GM23248 (cell line): ENCODE measurements at regions of chr3 and their contacts with region 1.

Region 1: DNA sequence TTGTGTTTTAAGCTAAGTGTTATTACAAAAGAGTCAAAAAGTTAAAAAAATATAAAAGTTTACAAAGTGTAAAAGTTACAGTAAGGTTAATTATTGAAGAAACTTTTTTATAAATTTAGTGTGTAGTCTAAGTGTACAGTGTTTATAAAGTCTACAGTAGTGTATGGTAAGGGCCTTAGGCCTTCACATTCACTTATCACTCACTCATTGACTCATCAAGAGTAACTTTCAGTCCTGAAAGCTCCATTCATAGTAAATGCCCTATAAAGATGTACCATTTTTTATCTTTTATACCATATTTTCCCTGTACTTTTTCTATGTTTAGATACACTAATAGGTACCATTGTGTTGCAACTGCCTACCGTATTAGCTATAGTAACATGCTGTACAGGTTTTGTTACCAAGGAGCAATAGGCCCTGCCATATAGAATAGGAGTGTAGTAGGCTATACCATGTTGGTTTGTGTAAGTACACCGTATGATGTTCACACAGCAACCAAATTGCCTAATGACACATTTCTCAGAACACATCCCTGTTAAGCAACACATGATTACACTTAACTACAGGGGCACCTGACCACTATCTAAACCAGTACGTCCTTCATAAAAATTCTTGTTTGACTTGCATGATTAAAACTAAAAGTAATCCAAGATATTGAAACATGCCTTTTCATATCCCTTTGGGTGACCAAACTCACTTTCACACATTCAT is 17.2 kb downstream of the RAD18 start:
- DNase-seq: no peak
- H3K4me3 ChIP-seq: no peak overlapping the region
- H3K27ac ChIP-seq: no peak overlapping the region
- H3K4me1 ChIP-seq: no peaks in the 10 kb centered on the region
- H3K27me3 ChIP-seq: no peaks in the 10 kb centered on the region

Region 2: DNA sequence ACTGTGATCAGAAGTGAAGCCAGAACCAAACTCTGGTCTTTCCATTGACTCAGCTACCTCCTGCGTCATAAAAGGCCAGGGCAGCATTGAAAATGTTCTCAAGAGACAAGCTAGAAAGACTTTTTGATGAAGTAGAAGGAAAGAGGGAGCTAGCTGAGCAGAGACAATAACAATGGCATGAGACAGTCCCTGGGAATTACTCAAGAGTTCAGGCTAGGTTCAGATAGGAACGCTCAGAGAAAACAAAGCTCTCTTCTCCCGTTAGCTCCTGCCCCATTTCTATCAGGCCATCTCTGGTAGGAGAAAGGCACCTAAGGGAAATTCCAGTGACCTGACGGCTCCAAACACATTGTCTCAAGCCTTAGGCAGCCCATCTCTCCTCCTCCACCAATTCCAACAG is 169.6 kb before region 1 on chr3:
- in situ Hi-C with region 1: loop called (anchors 10 kb)
- DNase-seq: peak; percentile 92
- H3K4me3 ChIP-seq: no peak overlapping the region
- H3K27ac ChIP-seq: peak overlapping the region; percentile 94
- H3K4me1 ChIP-seq: peaks cover 38% of the 10 kb centered on the region
- H3K27me3 ChIP-seq: no peaks in the 10 kb centered on the region

Region 3: GRCh38 chr3:9047452-9048346 is 101.7 kb after region 1 on chr3:
- in situ Hi-C with region 1: no loop called
- DNase-seq: no peak
- H3K4me3 ChIP-seq: no peak overlapping the region
- H3K27ac ChIP-seq: no peak overlapping the region
- H3K4me1 ChIP-seq: no peaks in the 10 kb centered on the region
- H3K27me3 ChIP-seq: no peaks in the 10 kb centered on the region

Region 4: GRCh38 chr3:9098569-9099367 is 152.7 kb after region 1 on chr3:
- in situ Hi-C with region 1: no loop called
- DNase-seq: no peak
- H3K4me3 ChIP-seq: no peak overlapping the region
- H3K27ac ChIP-seq: no peak overlapping the region
- H3K4me1 ChIP-seq: no peaks in the 10 kb centered on the region
- H3K27me3 ChIP-seq: peaks cover 5% of the 10 kb centered on the region; the same call in 1 of the 2 replicates